ENCODE measurements at regions of chr22 and their contacts with region 1.

Region 1: DNA sequence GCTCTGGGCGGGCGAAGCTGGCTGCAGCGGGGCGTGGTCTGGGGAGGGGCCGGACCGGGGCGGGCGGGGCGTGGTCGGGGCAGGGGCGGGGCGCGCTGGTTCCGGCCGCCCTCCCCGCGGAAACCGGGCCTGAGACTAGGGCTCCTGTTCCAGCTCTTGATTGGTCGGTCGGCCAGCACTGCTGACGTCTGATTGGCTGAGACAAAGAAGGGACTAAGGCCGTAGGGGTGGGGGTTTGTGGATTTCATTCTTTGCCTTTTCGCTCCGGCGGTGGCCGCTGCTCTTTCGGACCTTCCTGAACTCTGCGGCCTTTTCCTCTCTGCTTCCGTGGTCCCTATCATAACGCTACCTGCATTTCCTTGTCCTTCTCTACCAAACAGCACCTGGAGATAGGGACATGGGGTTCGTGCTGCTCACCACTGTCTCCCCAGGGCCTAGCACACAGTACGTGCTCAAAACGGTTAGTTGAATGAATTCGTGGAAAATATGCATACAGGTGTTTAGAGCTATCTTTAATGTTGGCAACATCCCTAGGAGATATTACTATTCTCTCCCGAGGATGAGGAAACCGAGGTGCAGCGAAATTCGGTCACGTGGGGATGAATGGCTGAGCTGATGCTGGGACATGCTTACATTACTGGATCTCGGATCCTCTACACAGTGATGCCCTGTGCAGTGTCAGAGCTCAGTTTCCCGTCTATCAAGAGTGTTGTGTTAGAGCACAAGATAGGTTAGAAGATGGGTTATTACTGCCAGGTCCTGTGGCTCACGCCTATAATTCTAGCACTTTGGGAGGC is 62.8 kb downstream of the NFAM1 start:
- DNase-seq: peak; percentile 91
- ATAC-seq: peak; percentile 99
- H3K4me3 Mint-ChIP-seq: peak overlapping the region; percentile 82
- H3K27ac Mint-ChIP-seq: peak overlapping the region; percentile 53
- H3K4me1 Mint-ChIP-seq: peaks cover 17% of the 10 kb centered on the region
- H3K27me3 Mint-ChIP-seq: peaks cover 27% of the 10 kb centered on the region

Region 2: DNA sequence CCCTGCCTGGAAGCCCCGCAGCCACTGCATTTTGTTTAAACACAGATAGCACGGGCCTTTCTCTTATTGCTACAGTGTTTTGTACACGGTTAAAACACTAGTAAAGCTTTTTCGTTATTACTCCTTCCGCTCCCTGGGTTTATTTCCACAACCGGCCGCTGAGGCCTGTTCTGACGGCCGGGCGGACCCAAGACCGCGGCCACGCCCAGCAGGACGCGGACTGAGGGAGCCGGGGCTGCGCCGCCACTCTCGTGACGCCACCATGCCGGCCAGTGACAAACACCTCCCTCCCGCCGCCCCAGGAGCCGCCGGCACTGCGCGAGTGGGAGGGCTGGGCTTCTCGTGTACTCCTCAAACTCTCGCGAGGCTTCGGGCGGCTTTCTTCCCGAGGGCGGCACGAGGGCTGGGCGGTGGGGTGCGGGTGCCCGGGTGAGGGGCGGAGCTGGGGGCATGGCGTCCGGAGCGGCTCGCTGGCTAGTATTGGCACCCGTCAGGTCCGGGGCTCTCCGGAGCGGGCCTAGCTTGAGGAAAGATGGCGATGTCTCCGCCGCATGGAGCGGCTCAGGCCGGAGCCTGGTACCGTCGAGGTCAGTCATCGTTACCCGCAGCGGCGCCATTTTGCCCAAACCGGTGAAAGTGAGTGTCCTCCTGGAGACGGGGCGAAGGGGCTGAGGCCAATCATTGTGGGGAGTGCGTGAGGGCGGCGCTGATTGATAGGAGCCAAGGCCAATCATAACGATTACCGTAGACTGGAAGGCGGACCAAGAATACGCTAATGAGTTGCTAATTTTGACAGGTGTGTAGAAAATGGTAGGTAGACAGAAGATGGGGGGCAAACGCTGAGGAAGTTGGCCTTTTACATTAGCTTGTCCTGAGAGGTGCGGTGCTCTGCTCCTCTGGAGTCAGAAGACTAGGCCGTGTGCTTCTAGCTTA is 289.9 kb before region 1 on chr22 and contains the start of gene SMDT1:
- CTCF ChIA-PET with region 1: interaction called, 4 read pairs
- POLR2A ChIA-PET with region 1: no interaction called
- intact Hi-C with region 1: loop called in 1 of 2 experiments (anchors 2 kb)
- DNase-seq: peak; percentile 99
- ATAC-seq: peak; percentile 95
- H3K4me3 Mint-ChIP-seq: peak within 1 kb of the TSS; percentile 90
- H3K27ac Mint-ChIP-seq: peak within 1 kb of the TSS; percentile 96
- H3K4me1 Mint-ChIP-seq: peaks cover 29% of the 10 kb centered on the region
- H3K27me3 Mint-ChIP-seq: no peaks in the 10 kb centered on the region
- total RNA-seq, gene SMDT1: 17.2 to 45.4 TPM

Region 3: DNA sequence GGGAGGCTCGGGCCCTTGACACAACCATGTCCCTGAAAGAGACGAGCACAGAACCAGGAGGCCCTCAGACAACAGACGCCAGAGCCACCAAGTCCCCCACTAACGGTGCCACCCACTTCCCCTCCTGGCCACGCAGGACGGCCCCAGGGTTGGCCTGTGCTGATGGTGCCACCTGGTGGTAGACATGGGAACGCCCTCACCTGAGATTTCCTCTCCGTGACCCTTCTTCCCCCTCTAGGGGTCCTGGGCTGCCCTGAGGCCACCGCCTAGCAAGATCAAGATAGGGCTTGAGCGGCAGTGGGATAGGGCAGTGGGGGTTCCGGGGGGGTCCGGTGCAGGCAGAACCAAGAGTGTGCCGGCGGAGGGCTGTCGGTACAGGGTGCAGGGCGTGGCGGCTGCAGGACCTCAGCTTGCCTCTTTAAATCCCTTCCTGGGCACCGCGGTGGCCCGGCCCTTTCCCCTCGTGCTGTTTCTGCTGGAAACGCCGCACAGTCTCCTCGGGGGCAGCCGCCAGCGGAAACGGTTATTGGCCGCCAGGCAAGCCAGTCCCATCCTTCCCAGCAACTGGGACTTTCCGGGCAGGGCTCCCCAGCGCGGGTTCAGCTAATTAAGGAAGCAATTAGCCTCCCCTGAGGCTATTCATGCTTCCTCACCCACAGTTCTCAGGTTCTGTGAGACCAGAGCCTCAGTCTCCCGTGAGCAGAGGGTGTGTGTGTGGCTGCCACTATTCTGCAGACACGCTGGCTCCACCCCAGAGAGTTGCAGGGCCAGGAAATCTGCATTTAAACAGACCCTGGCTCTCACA is 68.2 kb after region 1 on chr22:
- CTCF ChIA-PET with region 1: interaction called, 6 read pairs
- POLR2A ChIA-PET with region 1: no interaction called
- intact Hi-C with region 1: loop called in 1 of 2 experiments (anchors 1 kb)
- DNase-seq: peak; percentile 88
- ATAC-seq: peak; percentile 90
- H3K4me3 Mint-ChIP-seq: peak overlapping the region; percentile 66
- H3K27ac Mint-ChIP-seq: no peak overlapping the region
- H3K4me1 Mint-ChIP-seq: peaks cover 21% of the 10 kb centered on the region
- H3K27me3 Mint-ChIP-seq: peaks cover 2% of the 10 kb centered on the region

Region 4: GRCh38 chr22:42500161-42500835 is 130.9 kb after region 1 on chr22:
- CTCF ChIA-PET with region 1: no interaction called
- POLR2A ChIA-PET with region 1: no interaction called
- intact Hi-C with region 1: loop called in 1 of 2 experiments (anchors 2 kb)
- DNase-seq: peak; percentile 91
- ATAC-seq: peak; percentile 98
- H3K4me3 Mint-ChIP-seq: peak overlapping the region; percentile 38
- H3K27ac Mint-ChIP-seq: no peak overlapping the region
- H3K4me1 Mint-ChIP-seq: peaks cover 11% of the 10 kb centered on the region
- H3K27me3 Mint-ChIP-seq: no peaks in the 10 kb centered on the region

Region 5: GRCh38 chr22:42856865-42857704 is 487.6 kb after region 1 on chr22 and contains the start of gene ARFGAP3:
- CTCF ChIA-PET with region 1: no interaction called
- POLR2A ChIA-PET with region 1: no interaction called
- intact Hi-C with region 1: loop called in 1 of 2 experiments (anchors 1 kb)
- DNase-seq: peak; percentile 98
- ATAC-seq: peak; percentile 91
- H3K4me3 Mint-ChIP-seq: peak within 1 kb of the TSS; percentile 83
- H3K27ac Mint-ChIP-seq: peak within 1 kb of the TSS; percentile 85
- H3K4me1 Mint-ChIP-seq: peaks cover 11% of the 10 kb centered on the region
- H3K27me3 Mint-ChIP-seq: peaks cover 6% of the 10 kb centered on the region
- total RNA-seq, gene ARFGAP3: 22.5 to 23.0 TPM

Measured in activated CD4-positive, alpha-beta T cell treated with anti-CD3 and anti-CD28 coated beads for 36 hours (primary cell).